Activated CD4-positive, alpha-beta memory T cell treated with anti-CD3 and anti-CD28 coated beads for 36 hours (primary cell): ENCODE measurements at regions of chr7 and their contacts with region 1.

Region 1: GRCh38 chr7:141533149-141533949 is 17.9 kb upstream of the AGK start:
- DNase-seq: peak; percentile 71
- H3K4me3 Mint-ChIP-seq: no peak overlapping the region
- H3K27ac Mint-ChIP-seq: no peak overlapping the region
- H3K4me1 Mint-ChIP-seq: peaks cover 2% of the 10 kb centered on the region
- H3K27me3 Mint-ChIP-seq: peaks cover 8% of the 10 kb centered on the region

Region 2: GRCh38 chr7:140972876-140973859 is 560.2 kb before region 1 on chr7:
- CTCF ChIA-PET with region 1: no interaction called
- POLR2A ChIA-PET with region 1: no interaction called
- intact Hi-C with region 1: no loop called
- DNase-seq: no peak
- H3K4me3 Mint-ChIP-seq: no peak overlapping the region
- H3K27ac Mint-ChIP-seq: no peak overlapping the region
- H3K4me1 Mint-ChIP-seq: no peaks in the 10 kb centered on the region
- H3K27me3 Mint-ChIP-seq: peaks cover 2% of the 10 kb centered on the region

Region 3: GRCh38 chr7:141072548-141073172 is 460.7 kb before region 1 on chr7:
- CTCF ChIA-PET with region 1: interaction called, 3 read pairs
- POLR2A ChIA-PET with region 1: no interaction called
- intact Hi-C with region 1: loop called (anchors 2 kb)
- DNase-seq: peak; percentile 54
- H3K4me3 Mint-ChIP-seq: peak overlapping the region; percentile 68
- H3K27ac Mint-ChIP-seq: no peak overlapping the region
- H3K4me1 Mint-ChIP-seq: peaks cover 12% of the 10 kb centered on the region
- H3K27me3 Mint-ChIP-seq: peaks cover 44% of the 10 kb centered on the region

Region 4: GRCh38 chr7:141231018-141231792 is 302.1 kb before region 1 on chr7:
- CTCF ChIA-PET with region 1: no interaction called
- POLR2A ChIA-PET with region 1: no interaction called
- intact Hi-C with region 1: loop called (anchors 10 kb)
- DNase-seq: peak; percentile 12
- H3K4me3 Mint-ChIP-seq: no peak overlapping the region
- H3K27ac Mint-ChIP-seq: no peak overlapping the region
- H3K4me1 Mint-ChIP-seq: no peaks in the 10 kb centered on the region
- H3K27me3 Mint-ChIP-seq: peaks cover 7% of the 10 kb centered on the region

Region 5: GRCh38 chr7:141522657-141523342 is 10.5 kb before region 1 on chr7:
- CTCF ChIA-PET with region 1: interaction called, 14 read pairs
- POLR2A ChIA-PET with region 1: no interaction called
- intact Hi-C with region 1: no loop called
- DNase-seq: no peak
- H3K4me3 Mint-ChIP-seq: no peak overlapping the region
- H3K27ac Mint-ChIP-seq: no peak overlapping the region
- H3K4me1 Mint-ChIP-seq: peaks cover 5% of the 10 kb centered on the region
- H3K27me3 Mint-ChIP-seq: peaks cover 15% of the 10 kb centered on the region

Region 6: DNA sequence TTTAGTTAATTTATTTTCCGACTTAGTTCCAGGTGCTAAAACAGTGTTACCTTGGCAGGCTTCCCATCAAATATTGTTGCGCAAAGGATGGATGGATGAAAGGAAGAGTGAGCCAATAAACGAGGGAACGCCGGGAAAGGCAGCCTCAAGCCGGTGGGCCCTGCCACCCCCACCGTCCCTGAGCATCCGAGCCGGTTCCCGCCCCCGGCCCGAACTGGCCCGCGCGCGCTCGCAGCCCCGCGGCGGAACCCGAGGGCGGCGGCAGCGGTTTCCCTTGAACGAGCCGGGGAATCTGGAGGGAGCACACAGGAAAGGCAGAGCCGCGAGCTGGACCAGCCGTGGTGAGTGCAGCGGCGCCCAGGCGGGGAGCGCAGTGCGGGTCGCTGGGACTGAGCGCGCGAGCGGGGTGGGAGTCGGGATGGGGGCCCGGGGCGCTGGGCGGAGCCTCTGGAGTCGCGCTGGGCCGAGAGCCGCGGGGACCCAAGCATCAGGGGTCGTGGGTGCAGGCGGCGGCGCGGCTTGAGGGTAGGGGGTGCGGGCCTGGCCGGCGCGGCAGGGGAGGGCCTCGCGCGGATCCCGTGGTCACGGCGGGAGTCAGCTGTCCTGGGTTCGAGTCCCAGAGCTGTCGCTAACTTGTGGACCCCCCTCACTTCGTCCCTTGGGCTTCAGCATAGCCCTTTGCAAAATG is 17.9 kb after region 1 on chr7 and contains the start of gene AGK:
- CTCF ChIA-PET with region 1: interaction called, 10 read pairs
- POLR2A ChIA-PET with region 1: no interaction called
- intact Hi-C with region 1: no loop called
- DNase-seq: peak; percentile 87
- H3K4me3 Mint-ChIP-seq: peak within 1 kb of the TSS; percentile 91
- H3K27ac Mint-ChIP-seq: peak within 1 kb of the TSS; percentile 87
- H3K4me1 Mint-ChIP-seq: peaks cover 31% of the 10 kb centered on the region
- H3K27me3 Mint-ChIP-seq: no peaks in the 10 kb centered on the region
- total RNA-seq, gene AGK: 50.2 to 57.2 TPM